Transverse colon (tissue), 4 donors: ENCODE measurements at regions of chr7 and their contacts with region 1.

Region 1: DNA sequence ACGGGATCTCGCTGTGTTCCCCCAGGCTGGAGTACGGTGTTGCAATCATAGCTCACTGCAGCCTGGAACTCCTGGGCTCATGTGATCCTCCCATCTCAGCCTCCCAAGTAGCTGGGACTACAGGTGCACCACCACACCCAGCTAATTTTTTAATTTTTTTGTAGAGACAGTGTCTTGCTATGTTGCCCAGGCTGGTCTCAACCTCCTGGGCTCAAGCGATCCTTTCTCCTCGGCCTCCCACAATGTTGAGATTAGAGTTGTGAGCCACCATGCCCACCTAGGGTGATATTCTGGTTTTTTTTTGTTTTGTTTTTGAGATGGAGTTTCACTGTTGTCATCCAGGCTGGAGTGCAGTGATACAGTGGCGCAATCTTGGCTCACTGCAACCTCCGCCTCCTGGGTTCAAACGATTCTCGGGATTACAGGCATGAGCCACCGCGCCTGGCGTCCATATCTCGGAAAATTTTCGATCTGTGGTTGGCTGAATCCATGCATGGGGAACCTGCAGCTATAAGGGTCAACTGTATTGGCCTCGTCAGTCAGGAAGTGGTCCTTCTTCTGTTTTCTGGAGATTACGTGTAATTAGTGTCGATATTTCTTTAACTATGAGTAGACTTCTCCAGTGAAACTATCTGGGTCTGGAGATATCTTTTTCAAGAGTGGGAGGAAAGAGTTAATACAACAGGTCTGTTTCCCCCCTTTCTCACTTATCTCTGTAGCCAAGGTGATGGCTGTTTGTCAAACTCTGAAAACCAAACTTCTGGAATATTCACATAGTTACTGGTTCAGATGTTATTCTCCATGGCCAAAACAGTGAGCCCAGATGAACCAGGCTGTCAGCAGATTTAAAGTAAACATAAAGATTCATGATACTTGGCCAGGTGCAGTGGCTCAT is 21.0 kb upstream of the FIS1 start:
- DNase-seq: no peak
- H3K4me3 ChIP-seq: no peak overlapping the region
- H3K27ac ChIP-seq: no peak overlapping the region
- H3K4me1 ChIP-seq: no peaks in the 10 kb centered on the region
- H3K27me3 ChIP-seq: peaks cover 6% of the 10 kb centered on the region
- CTCF ChIP-seq: no peak
- EP300 ChIP-seq: no peak
- POLR2A ChIP-seq: no peak

Region 2: GRCh38 chr7:99881370-99881769 is 1384.5 kb before region 1 on chr7:
- in situ Hi-C with region 1: no loop called
- intact Hi-C with region 1: loop called (anchors 10 kb)
- DNase-seq: no peak
- H3K4me3 ChIP-seq: no peak overlapping the region
- H3K27ac ChIP-seq: no peak overlapping the region
- H3K4me1 ChIP-seq: no peaks in the 10 kb centered on the region
- H3K27me3 ChIP-seq: no peaks in the 10 kb centered on the region
- CTCF ChIP-seq: no peak
- EP300 ChIP-seq: no peak
- POLR2A ChIP-seq: no peak

Region 3: DNA sequence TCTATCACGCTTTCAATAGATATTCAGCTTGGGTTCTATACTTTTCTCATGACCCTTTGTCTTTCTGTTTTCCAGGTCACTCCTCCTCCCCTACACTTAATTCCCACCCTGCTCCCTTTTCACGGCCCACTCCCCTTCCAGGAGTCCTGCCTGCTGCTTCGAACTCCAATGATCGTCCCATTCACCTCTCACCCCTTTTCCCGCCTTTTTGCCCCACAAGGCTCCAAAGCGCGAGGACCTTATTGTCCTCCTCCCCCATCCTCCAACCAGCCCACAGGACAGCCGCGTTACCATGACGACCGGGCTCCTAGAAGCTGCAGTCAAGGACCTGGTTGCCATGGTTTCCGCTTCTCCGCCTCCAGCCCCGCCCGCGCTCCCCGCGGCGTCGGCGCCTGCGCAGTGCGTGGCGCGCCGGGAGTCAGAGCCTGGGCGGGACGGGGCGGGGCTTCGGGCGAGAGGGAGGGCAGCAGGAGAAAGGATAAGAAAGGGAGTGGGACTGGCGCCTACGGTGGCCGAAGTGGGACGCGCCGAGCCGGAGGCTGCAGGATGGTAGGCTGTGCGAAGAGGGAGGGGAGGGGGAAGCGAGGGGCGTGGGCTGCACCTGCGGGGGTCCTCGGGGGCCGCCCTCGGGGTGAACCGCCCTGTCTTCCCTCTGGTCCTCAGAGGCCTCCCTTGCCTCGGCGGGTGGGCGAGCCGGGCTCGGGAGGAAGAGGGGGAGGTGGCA is 111.7 kb before region 1 on chr7 and contains the start of gene AP1S1:
- in situ Hi-C with region 1: loop called in 1 of 4 experiments (anchors 5 kb)
- intact Hi-C with region 1: no loop called
- DNase-seq: peak; percentile 96
- H3K4me3 ChIP-seq: peak within 1 kb of the TSS; percentile 59 to 96 (median 88)
- H3K27ac ChIP-seq: peak within 1 kb of the TSS; percentile 66 to 85 (median 78)
- H3K4me1 ChIP-seq: peaks cover 5 to 16% (median 10%) of the 10 kb centered on the region in 4 donors
- H3K27me3 ChIP-seq: no peaks in the 10 kb centered on the region
- CTCF ChIP-seq: no peak
- EP300 ChIP-seq: no peak
- POLR2A ChIP-seq: peak; percentile 37
- total RNA-seq, gene AP1S1: 18.3 to 87.3 (median 54.0) TPM